ENCODE measurements at regions of chr12 and their contacts with region 1.

Region 1: DNA sequence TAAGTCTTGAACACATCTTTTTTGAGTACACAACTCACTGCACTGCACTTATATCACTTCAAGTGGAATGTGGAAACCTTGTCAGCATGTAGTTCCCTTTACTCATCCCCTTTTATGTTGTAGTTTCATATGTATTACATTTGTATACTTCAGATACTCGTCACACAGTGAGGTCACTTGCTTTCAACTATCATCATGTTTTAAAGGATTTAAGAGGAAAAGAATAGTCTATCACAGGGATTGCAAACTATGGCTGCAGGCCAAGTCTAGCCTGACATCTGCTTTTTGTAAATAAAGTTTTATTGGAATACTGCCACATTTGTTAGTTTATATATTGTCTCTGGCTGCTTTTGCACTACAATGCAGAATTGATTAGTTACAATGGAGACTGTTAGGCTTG is 24.3 kb downstream of the CNOT2 start:
- DNase-seq: no peak
- H3K4me3 Mint-ChIP-seq: no peak overlapping the region
- H3K27ac Mint-ChIP-seq: peak overlapping the region; percentile 28
- H3K4me1 Mint-ChIP-seq: peaks cover 70% of the 10 kb centered on the region
- H3K27me3 Mint-ChIP-seq: no peaks in the 10 kb centered on the region

Region 2: DNA sequence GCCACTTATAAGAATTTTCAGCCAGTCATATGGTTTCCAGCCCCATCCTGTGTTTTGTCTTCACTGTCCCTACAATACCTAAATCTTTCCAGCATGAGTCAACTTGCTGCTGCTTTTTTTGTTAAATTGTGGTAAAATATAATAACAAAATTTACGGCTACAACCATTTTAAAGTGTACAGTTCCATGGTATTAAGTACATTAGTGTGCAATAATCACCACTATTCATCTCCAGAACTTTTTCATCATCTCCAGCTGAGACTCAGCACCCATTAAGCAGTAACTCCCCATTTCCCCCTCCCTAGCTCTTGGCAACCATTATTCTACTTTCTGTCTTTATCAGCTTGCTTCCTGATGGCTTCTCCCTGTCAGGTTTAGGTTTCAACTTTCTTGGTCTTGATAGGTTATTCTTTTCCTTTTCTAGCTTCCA is 758.2 kb before region 1 on chr12:
- CTCF ChIA-PET with region 1: no interaction called
- POLR2A ChIA-PET with region 1: no interaction called
- intact Hi-C with region 1: no loop called
- DNase-seq: no peak
- H3K4me3 Mint-ChIP-seq: no peak overlapping the region
- H3K27ac Mint-ChIP-seq: no peak overlapping the region
- H3K4me1 Mint-ChIP-seq: peaks cover 48% of the 10 kb centered on the region
- H3K27me3 Mint-ChIP-seq: no peaks in the 10 kb centered on the region

Region 3: DNA sequence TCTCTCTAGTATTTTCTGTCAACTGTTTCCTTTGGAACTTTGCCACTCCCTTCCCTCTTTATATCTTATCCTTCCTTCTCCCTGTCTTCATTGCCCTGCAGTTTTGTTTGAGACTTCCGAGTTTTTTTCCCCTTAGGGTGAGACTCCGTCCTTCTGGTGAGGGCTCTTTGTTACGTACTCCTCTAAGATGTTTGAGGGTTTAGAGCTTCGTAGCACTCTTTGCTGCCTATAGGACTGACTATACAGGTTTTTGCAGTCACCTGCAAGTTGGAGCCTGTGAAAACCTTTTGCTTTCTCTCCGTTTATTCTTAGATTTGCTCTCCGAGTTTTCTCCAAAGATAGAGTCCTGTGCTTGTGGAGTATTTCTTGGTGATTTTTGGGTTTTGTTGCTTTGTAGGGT is 484.2 kb before region 1 on chr12:
- CTCF ChIA-PET with region 1: no interaction called
- POLR2A ChIA-PET with region 1: no interaction called
- intact Hi-C with region 1: no loop called
- DNase-seq: no peak
- H3K4me3 Mint-ChIP-seq: no peak overlapping the region
- H3K27ac Mint-ChIP-seq: no peak overlapping the region
- H3K4me1 Mint-ChIP-seq: no peaks in the 10 kb centered on the region
- H3K27me3 Mint-ChIP-seq: no peaks in the 10 kb centered on the region

Region 4: DNA sequence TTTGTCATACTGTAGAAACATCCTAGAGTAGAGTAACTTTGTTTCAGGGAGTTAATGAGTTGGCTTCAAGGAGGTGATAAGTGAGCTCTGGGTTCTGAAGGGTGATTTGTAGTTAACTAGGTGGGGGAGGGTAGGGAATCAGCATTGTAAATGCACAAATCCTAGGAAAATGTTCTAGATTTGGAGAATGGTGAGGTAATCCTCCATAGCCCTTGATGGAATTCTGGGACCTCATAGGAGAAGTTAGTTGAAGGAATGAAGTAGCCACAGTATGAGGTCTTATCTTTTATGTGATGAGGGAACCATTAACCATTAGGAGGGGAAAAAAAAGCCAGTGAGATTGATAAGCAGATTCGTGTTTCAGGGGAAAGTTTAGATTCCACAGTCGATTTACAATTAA is 16.3 kb before region 1 on chr12:
- CTCF ChIA-PET with region 1: no interaction called
- POLR2A ChIA-PET with region 1: no interaction called
- intact Hi-C with region 1: loop called (anchors 2 kb)
- DNase-seq: no peak
- H3K4me3 Mint-ChIP-seq: no peak overlapping the region
- H3K27ac Mint-ChIP-seq: no peak overlapping the region
- H3K4me1 Mint-ChIP-seq: peaks cover 81% of the 10 kb centered on the region
- H3K27me3 Mint-ChIP-seq: no peaks in the 10 kb centered on the region

Region 5: DNA sequence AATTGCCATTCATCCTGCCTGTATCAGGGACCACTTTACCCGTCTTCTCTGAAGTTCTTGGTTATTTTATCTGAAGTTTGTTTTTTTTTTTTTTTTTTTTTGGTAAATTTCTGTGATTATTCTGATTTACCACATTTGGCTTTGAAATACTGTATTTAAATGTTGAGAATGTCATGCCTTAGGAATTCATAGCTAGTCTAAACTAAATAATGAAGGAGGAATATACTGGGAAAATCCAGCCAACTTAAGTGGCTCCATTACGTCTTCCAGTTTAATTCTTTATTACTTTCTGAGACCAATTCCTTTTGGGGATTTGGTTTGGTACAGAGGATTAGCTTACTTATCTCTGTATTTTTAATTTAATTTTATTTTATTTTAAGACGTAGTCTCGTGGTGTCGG is 38.2 kb after region 1 on chr12:
- CTCF ChIA-PET with region 1: no interaction called
- POLR2A ChIA-PET with region 1: no interaction called
- intact Hi-C with region 1: loop called (anchors 5 kb)
- DNase-seq: no peak
- H3K4me3 Mint-ChIP-seq: no peak overlapping the region
- H3K27ac Mint-ChIP-seq: no peak overlapping the region
- H3K4me1 Mint-ChIP-seq: peaks cover 38% of the 10 kb centered on the region
- H3K27me3 Mint-ChIP-seq: no peaks in the 10 kb centered on the region

Region 6: DNA sequence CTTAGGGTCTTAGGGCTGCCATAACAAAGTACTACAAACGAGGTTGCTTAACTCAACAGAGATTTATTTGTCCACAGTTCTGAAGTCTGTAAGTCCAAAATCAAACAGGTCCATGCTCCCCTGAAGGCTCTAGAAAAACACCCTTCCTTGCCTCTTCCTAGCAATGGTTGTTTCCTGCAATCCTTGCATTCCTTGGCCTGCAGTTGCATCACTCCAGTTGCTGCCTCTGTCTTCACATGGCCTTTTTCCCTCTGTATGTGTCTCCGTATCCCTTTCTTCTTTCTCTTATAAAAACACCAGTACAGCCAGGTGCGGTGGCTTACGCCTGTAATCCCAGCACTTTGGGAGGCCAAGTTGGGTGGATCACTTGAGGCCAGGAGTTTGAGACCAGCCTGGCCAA is 115.9 kb after region 1 on chr12:
- CTCF ChIA-PET with region 1: no interaction called
- POLR2A ChIA-PET with region 1: no interaction called
- intact Hi-C with region 1: no loop called
- DNase-seq: no peak
- H3K4me3 Mint-ChIP-seq: no peak overlapping the region
- H3K27ac Mint-ChIP-seq: no peak overlapping the region
- H3K4me1 Mint-ChIP-seq: peaks cover 14% of the 10 kb centered on the region
- H3K27me3 Mint-ChIP-seq: no peaks in the 10 kb centered on the region

Region 7: DNA sequence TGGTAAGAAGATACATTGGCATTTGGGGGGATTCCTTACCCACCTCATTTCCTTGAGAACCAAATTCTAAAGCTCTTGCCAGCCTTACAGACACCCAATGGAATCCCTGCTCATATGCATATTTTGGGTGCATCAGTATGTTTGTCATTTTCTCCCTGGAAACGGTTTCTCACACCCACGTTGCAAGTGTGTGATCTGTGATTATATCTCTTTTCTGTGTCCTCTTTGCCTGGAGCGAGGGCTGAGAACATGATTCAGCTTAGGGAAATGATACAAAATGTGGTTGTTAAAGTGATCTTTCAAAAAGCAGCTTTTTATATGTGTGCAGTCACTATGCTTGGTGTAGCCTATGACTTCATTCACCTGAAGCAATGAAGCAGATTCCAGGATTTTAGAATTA is 150.6 kb after region 1 on chr12:
- CTCF ChIA-PET with region 1: no interaction called
- POLR2A ChIA-PET with region 1: no interaction called
- intact Hi-C with region 1: no loop called
- DNase-seq: peak; percentile 11
- H3K4me3 Mint-ChIP-seq: no peak overlapping the region
- H3K27ac Mint-ChIP-seq: no peak overlapping the region
- H3K4me1 Mint-ChIP-seq: no peaks in the 10 kb centered on the region
- H3K27me3 Mint-ChIP-seq: no peaks in the 10 kb centered on the region

Measured in activated CD4-positive, alpha-beta memory T cell treated with anti-CD3 and anti-CD28 coated beads for 36 hours (primary cell).